ENCODE measurements at regions of chr5 and their contacts with region 1.

Region 1: GRCh38 chr5:45623855-45624254 is 72.3 kb downstream of the HCN1 start:
- DNase-seq: no peak
- ATAC-seq: no peak
- H3K4me3 ChIP-seq: no peak overlapping the region
- H3K27ac ChIP-seq: no peak overlapping the region
- H3K4me1 ChIP-seq: no peaks in the 10 kb centered on the region
- H3K27me3 ChIP-seq: no peaks in the 10 kb centered on the region
- CTCF ChIP-seq: no peak
- POLR2A ChIP-seq: no peak
- RAD21 ChIP-seq: no peak

Region 2: DNA sequence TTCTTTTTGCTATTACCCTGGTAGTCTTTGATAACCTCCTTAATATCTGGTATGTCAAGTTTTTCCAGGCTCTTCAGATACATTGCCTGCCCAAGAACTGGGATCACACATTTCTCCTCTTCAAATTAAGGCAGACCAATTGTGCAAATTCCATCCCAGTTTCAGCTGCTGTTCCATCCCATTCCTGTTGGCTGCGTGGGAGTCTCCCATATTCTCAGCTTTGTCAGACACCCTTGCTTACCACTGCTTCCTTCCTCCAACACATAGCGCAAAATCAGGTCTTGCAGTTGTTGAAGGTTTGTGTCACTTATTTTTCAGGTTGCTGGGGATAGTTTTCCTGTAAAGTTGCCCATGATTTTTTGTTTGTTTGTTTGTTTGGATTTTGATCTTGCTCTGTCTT is 57.1 kb after region 1 on chr5:
- CTCF ChIA-PET with region 1: no interaction called
- POLR2A ChIA-PET with region 1: no interaction called
- dilution Hi-C with region 1: no loop called
- in situ Hi-C with region 1: no loop called
- intact Hi-C with region 1: loop called (anchors 2 kb)
- DNase-seq: no peak
- ATAC-seq: no peak
- H3K4me3 ChIP-seq: no peak overlapping the region
- H3K27ac ChIP-seq: no peak overlapping the region
- H3K4me1 ChIP-seq: no peaks in the 10 kb centered on the region
- H3K27me3 ChIP-seq: no peaks in the 10 kb centered on the region
- CTCF ChIP-seq: no peak
- POLR2A ChIP-seq: no peak
- RAD21 ChIP-seq: no peak